Panc1 (cell line): ENCODE measurements at regions of chr9 and their contacts with region 1.

Region 1: GRCh38 chr9:98303623-98304125 is 48.2 kb upstream of the TBC1D2 start:
- DNase-seq: no peak
- ATAC-seq: no peak
- H3K4me3 ChIP-seq: no peak overlapping the region
- H3K27ac ChIP-seq: no peak overlapping the region
- H3K4me1 ChIP-seq: no peaks in the 10 kb centered on the region
- H3K27me3 ChIP-seq: no peaks in the 10 kb centered on the region
- CTCF ChIP-seq: no peak

Region 2: DNA sequence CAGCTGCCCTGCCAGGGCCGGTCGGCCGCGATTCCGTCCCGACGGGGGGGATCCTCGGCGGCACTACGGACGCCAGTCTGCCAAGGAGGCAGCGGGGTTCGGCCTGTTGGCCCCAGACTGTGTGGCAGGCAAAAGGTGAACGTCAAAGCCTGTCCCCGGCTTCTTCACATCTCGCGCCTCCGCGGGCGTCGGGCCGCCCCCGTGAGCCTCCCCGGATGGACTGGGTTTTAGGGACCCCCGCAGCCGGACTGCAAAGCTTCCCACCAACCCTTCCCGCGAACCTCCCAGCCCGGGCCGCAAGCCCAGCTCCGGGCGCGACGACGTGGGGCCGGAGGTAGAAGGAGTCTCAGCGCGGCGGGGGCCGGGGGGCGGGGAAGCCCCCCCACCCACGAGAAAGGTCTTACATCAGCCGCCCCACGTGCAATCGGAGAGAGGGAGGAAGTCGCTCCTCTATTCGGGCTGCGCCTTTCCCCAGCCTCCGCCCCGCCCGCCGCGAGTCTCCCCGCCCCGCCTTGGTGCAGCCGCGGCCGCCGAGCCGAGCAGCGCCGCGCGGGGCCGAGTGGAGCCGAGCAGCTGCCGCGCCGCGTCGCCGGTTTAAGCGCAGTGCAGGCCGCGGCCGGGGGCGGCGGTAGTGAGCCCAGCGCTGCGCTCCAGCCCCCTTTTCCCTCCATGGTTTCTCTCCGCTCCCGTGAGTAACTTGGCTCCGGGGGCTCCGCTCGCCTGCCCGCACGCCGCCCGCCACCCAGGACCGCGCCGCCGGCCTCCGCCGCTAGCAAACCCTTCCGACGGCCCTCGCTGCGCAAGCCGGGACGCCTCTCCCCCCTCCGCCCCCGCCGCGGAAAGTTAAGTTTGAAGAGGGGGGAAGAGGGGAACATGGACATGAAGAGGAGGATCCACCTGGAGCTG is 320.7 kb before region 1 on chr9 and contains the start of gene ANP32B:
- CTCF ChIA-PET with region 1: interaction called, 10 read pairs
- POLR2A ChIA-PET with region 1: no interaction called
- in situ Hi-C with region 1: no loop called
- intact Hi-C with region 1: no loop called
- DNase-seq: peak; percentile 33
- ATAC-seq: peak; percentile 88
- H3K4me3 ChIP-seq: peak within 1 kb of the TSS; percentile 68
- H3K27ac ChIP-seq: peak within 1 kb of the TSS; percentile 87
- H3K4me1 ChIP-seq: peaks cover 20% of the 10 kb centered on the region
- H3K27me3 ChIP-seq: no peaks in the 10 kb centered on the region
- CTCF ChIP-seq: peak; percentile 94
- total RNA-seq, gene ANP32B: 109 TPM